ENCODE measurements at regions of chr7 and their contacts with region 1.

Region 1: DNA sequence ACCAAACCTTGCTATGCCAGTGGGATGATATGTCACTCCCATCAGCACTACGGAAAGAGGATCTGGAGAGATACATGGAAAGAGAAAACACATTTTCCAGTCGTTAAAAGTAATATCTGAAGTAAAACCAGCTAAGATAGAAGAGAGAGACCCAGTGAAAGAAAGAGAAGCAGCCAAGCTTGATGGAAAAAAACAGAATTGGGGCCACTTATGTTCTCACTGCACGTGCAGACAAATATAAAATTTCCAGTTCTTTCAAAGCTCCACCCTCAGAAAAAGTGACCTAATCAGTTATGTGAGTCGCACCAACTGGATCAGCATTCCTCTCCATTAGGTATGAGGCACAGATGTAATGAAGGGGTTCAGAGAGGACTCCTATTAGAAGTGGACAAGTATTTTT is 266.1 kb downstream of the MTERF1 start:
- DNase-seq: no peak
- ATAC-seq: no peak
- H3K4me3 ChIP-seq: no peak overlapping the region
- H3K4me3 Mint-ChIP-seq: no peak overlapping the region
- H3K27ac ChIP-seq: no peak overlapping the region
- H3K27ac Mint-ChIP-seq: no peak overlapping the region
- H3K4me1 ChIP-seq: no peaks in the 10 kb centered on the region
- H3K4me1 Mint-ChIP-seq: no peaks in the 10 kb centered on the region
- H3K27me3 ChIP-seq: no peaks in the 10 kb centered on the region
- H3K27me3 Mint-ChIP-seq: peaks cover 0 to 13% (median 7%) of the 10 kb centered on the region in 5 donors

Region 2: DNA sequence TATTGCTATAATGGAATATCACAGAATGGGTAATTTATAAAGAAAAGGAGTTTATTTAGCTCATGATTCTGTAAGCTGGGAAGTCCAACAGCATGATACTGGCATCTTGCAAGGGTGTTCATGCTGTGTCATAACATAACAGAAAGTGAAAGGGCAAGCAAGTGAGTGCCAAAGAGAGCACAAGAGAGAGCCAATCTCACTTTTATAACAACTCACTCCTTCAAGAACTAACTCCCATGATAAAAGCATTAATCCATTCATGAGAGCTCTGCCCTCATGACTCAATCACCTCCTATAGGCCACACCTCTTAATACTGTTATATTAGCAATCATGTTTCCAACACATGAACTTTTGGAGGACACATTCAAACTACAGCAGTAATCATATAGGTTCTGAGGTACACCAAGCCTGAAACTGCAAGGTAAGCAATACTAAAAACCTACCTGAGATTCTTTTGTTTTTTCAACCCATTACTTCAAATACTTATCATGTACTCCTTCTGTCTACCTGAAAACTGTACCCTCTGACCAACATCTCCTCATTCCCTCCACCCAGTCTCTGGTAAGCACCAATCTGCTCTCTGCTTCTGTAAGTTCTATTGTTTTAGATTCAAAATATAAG is 46.4 kb after region 1 on chr7:
- CTCF ChIA-PET with region 1: no interaction called
- POLR2A ChIA-PET with region 1: no interaction called
- intact Hi-C with region 1: loop called in 1 of 2 experiments (anchors 5 kb)
- DNase-seq: no peak
- ATAC-seq: no peak
- H3K4me3 ChIP-seq: no peak overlapping the region
- H3K4me3 Mint-ChIP-seq: no peak overlapping the region
- H3K27ac ChIP-seq: no peak overlapping the region
- H3K27ac Mint-ChIP-seq: no peak overlapping the region
- H3K4me1 ChIP-seq: no peaks in the 10 kb centered on the region
- H3K4me1 Mint-ChIP-seq: peaks cover 0 to 4% (median 0%) of the 10 kb centered on the region in 7 donors
- H3K27me3 ChIP-seq: no peaks in the 10 kb centered on the region
- H3K27me3 Mint-ChIP-seq: no peaks in the 10 kb centered on the region

Measured in naive thymus-derived CD4-positive, alpha-beta T cell (primary cell).